ENCODE measurements at regions of chr14 and their contacts with region 1.

Region 1: GRCh38 chr14:36373982-36374673 is 53.7 kb upstream of the MBIP start:
- DNase-seq: peak; percentile 84 to 86
- H3K4me3 ChIP-seq: no peak overlapping the region
- H3K4me3 Mint-ChIP-seq: no peak overlapping the region
- H3K27ac Mint-ChIP-seq: no peak overlapping the region
- H3K4me1 ChIP-seq: no peaks in the 10 kb centered on the region
- H3K4me1 Mint-ChIP-seq: peaks cover 6% of the 10 kb centered on the region
- H3K27me3 ChIP-seq: no peaks in the 10 kb centered on the region
- H3K27me3 Mint-ChIP-seq: peaks cover 3% of the 10 kb centered on the region
- CTCF ChIP-seq: peak; percentile 85 to 90

Region 2: DNA sequence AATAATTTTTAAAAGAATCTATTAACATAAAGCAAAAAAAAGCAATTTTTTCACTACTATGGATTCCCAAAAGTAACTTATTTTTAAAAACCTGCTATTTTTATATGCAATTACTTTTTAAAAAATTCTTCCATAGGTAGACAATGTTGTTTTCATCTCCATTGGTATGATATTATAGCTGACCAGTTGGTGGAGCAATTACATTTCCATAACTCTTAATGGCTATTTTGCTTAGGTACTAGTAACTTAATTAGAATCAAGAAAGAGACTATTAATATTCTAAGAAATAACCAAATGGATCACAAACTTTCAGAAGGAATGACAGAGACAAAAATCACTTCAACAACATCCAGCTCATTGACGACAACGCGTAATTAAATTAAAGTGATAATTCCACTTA is 132.9 kb before region 1 on chr14:
- CTCF ChIA-PET with region 1: no interaction called
- POLR2A ChIA-PET with region 1: no interaction called
- intact Hi-C with region 1: loop called (anchors 1 kb)
- DNase-seq: no peak
- H3K4me3 ChIP-seq: no peak overlapping the region
- H3K4me3 Mint-ChIP-seq: no peak overlapping the region
- H3K27ac Mint-ChIP-seq: no peak overlapping the region
- H3K4me1 ChIP-seq: peaks cover 13% of the 10 kb centered on the region
- H3K4me1 Mint-ChIP-seq: peaks cover 20% of the 10 kb centered on the region
- H3K27me3 ChIP-seq: no peaks in the 10 kb centered on the region
- H3K27me3 Mint-ChIP-seq: no peaks in the 10 kb centered on the region
- CTCF ChIP-seq: peak in 1 of 2 experiments; percentile 27

Region 3: GRCh38 chr14:36451301-36452065 is 77.4 kb after region 1 on chr14:
- CTCF ChIA-PET with region 1: no interaction called
- POLR2A ChIA-PET with region 1: no interaction called
- intact Hi-C with region 1: no loop called
- DNase-seq: no peak
- H3K4me3 ChIP-seq: no peak overlapping the region
- H3K4me3 Mint-ChIP-seq: no peak overlapping the region
- H3K27ac Mint-ChIP-seq: no peak overlapping the region
- H3K4me1 ChIP-seq: peaks cover 3% of the 10 kb centered on the region; the same call in 1 of the 2 replicates
- H3K4me1 Mint-ChIP-seq: peaks cover 6% of the 10 kb centered on the region
- H3K27me3 ChIP-seq: no peaks in the 10 kb centered on the region
- H3K27me3 Mint-ChIP-seq: no peaks in the 10 kb centered on the region
- CTCF ChIP-seq: no peak

Region 4: GRCh38 chr14:36604757-36605505 is 230.8 kb after region 1 on chr14:
- CTCF ChIA-PET with region 1: no interaction called
- POLR2A ChIA-PET with region 1: no interaction called
- intact Hi-C with region 1: loop called (anchors 1 kb)
- DNase-seq: peak; percentile 69 to 80
- H3K4me3 ChIP-seq: no peak overlapping the region
- H3K4me3 Mint-ChIP-seq: no peak overlapping the region
- H3K27ac Mint-ChIP-seq: no peak overlapping the region
- H3K4me1 ChIP-seq: no peaks in the 10 kb centered on the region
- H3K4me1 Mint-ChIP-seq: peaks cover 8% of the 10 kb centered on the region
- H3K27me3 ChIP-seq: no peaks in the 10 kb centered on the region
- H3K27me3 Mint-ChIP-seq: no peaks in the 10 kb centered on the region
- CTCF ChIP-seq: peak; percentile 71 to 84

Measured in Caco-2 (cell line).